Heart left ventricle (tissue), 16 donors: ENCODE measurements at regions of chr5 and their contacts with region 1.

Region 1: GRCh38 chr5:142453932-142454331 is 129.1 kb upstream of the SPRY4 start:
- DNase-seq: no peak
- ATAC-seq: peak in 1 of 4 donors; percentile 70
- H3K4me3 ChIP-seq: no peak overlapping the region
- H3K27ac ChIP-seq: peak overlapping the region in 8 of 12 donors; percentile 2 to 59 (median 44)
- H3K4me1 ChIP-seq: peaks cover 0 to 15% (median 5%) of the 10 kb centered on the region in 12 donors
- H3K27me3 ChIP-seq: no peaks in the 10 kb centered on the region
- CTCF ChIP-seq: no peak
- POLR2A ChIP-seq: no peak

Region 2: DNA sequence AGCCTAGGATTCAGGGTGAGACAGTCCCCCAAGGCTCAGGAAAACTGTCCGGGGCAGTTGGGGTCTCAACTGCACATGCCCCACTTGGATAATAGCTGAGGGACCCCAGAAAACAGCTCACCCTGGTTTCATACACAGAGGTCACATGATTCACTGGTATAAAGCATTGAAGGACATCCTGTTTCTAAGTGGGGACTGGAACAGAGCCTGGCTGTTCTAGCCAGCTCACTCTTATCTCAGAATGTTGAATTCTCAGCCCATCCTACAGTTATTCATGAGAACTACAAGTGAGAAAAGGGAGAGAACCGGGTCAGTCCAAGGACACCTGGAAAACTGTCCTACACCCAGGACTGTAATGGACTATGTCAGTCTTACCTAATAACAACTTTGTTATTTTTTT is 61.1 kb after region 1 on chr5:
- intact Hi-C with region 1: loop called in 1 of 10 experiments (anchors 2 kb)
- DNase-seq: no peak
- ATAC-seq: peak in 2 of 4 donors; percentile 55 to 74
- H3K4me3 ChIP-seq: no peak overlapping the region
- H3K27ac ChIP-seq: no peak overlapping the region
- H3K4me1 ChIP-seq: peaks cover 0 to 22% (median 2%) of the 10 kb centered on the region in 12 donors
- H3K27me3 ChIP-seq: no peaks in the 10 kb centered on the region
- CTCF ChIP-seq: no peak
- POLR2A ChIP-seq: no peak